ENCODE measurements at regions of chr5 and their contacts with region 1.

Region 1: GRCh38 chr5:170571875-170572852 is 68.3 kb downstream of the KCNIP1 start:
- DNase-seq: peak; percentile 22
- H3K4me3 ChIP-seq: no peak overlapping the region
- H3K27ac ChIP-seq: no peak overlapping the region
- H3K4me1 ChIP-seq: no peaks in the 10 kb centered on the region
- H3K27me3 ChIP-seq: peaks cover 4 to 11% of the 10 kb centered on the region in 2 experiments
- CTCF ChIP-seq: no peak
- POLR2A ChIP-seq: no peak

Region 2: DNA sequence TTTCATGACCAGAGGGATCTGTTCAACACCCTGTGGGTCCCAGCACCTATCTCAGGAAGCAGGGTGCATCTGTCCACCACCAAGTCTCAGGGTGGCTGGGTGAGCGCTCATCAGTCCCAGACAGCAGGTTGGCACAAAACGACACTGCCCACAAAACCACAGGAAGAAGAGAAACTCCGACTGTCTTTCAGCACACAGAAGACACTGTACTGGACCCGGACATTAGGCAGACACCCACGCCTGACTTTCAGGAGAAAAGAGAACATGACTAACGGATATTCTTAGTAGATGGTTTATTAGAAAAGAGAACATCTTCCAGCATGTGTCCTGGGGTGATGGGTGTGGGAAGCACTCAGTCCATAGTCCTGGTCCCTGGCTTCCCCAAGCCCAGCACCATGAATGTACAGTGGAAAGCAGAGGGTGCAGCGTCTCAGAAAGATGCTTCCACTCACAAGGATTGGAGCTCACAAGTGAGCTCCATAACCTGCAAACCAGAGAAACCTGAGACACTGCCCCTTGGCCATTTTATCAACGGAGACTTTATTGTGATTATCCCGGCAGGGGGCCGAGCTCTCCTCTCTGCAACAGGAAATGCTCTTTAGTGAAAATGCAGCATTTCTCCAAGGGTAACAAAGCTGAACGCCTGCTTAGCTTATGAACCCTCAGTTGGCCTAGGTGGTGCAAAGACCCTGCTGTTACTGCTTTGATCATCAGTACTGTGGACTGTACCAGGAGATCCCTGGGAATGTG is 238.8 kb before region 1 on chr5:
- CTCF ChIA-PET with region 1: no interaction called
- POLR2A ChIA-PET with region 1: no interaction called
- dilution Hi-C with region 1: no loop called
- intact Hi-C with region 1: no loop called
- DNase-seq: no peak
- H3K4me3 ChIP-seq: no peak overlapping the region
- H3K27ac ChIP-seq: no peak overlapping the region
- H3K4me1 ChIP-seq: peaks cover 14% of the 10 kb centered on the region
- H3K27me3 ChIP-seq: peaks cover 0 to 2% of the 10 kb centered on the region in 2 experiments
- CTCF ChIP-seq: no peak
- POLR2A ChIP-seq: no peak

Region 3: GRCh38 chr5:170504031-170504596 is 68.0 kb before region 1 on chr5:
- CTCF ChIA-PET with region 1: interaction called, 4 read pairs
- POLR2A ChIA-PET with region 1: no interaction called
- dilution Hi-C with region 1: no loop called
- intact Hi-C with region 1: loop called (anchors 2 kb)
- DNase-seq: peak; percentile 24
- H3K4me3 ChIP-seq: peak overlapping the region in 1 of 3 experiments; percentile 22
- H3K27ac ChIP-seq: no peak overlapping the region
- H3K4me1 ChIP-seq: no peaks in the 10 kb centered on the region
- H3K27me3 ChIP-seq: peaks cover 45 to 46% of the 10 kb centered on the region in 2 experiments
- CTCF ChIP-seq: no peak
- POLR2A ChIP-seq: no peak

Region 4: GRCh38 chr5:170552621-170553115 is 19.5 kb before region 1 on chr5:
- CTCF ChIA-PET with region 1: no interaction called
- POLR2A ChIA-PET with region 1: no interaction called
- dilution Hi-C with region 1: no loop called
- intact Hi-C with region 1: no loop called
- DNase-seq: peak; percentile 41
- H3K4me3 ChIP-seq: no peak overlapping the region
- H3K27ac ChIP-seq: no peak overlapping the region
- H3K4me1 ChIP-seq: no peaks in the 10 kb centered on the region
- H3K27me3 ChIP-seq: no peaks in the 10 kb centered on the region
- CTCF ChIP-seq: no peak
- POLR2A ChIP-seq: no peak